H1 (cell line): ENCODE measurements at regions of chr3 and their contacts with region 1.

Region 1: DNA sequence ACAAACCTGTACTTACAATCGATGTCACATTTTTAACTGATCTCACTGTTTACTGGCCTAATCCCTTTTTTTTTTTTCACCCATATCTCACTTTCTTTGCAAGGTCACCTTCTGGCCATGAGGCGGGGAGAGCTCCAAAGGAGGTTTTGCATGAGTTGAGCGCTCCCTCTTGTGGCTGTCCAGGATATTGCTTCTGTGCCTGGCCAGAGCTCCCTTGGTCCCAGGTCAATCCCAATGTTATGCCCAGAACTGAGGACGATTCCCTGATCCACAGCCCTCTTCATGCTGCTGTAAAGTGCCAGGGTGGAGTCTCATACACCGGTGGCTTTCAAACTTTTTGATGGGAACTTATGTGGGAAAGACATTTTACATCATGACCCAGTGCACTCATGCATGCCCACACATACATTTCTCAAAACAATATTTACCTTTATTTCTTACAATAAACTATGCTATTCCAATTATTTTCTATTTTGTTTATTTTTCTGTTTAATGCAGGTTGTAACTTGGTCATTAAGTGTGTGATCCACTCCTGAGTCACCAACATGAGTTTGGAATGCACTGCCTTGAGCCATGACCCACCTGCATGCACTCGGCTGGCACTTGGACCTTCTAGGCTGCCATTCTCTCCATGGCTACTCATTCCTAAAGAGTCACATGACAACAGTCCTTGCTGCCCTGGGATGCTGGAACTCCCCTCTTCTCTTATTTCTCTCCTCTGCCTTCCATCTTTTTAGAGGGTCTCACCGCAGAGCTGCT is 9.6 kb upstream of the SST start:
- DNase-seq: peak; percentile 63 to 96
- H3K4me3 ChIP-seq: no peak overlapping the region
- H3K27ac ChIP-seq: no peak overlapping the region
- H3K4me1 ChIP-seq: no peaks in the 10 kb centered on the region; a peak in 1 of 7 replicates
- H3K27me3 ChIP-seq: peaks cover 0 to 3% (median 0%) of the 10 kb centered on the region in 4 experiments; a peak in 1 of 7 replicates
- CTCF ChIP-seq: peak; percentile 86 to 98 (median 96)
- EP300 ChIP-seq: no peak
- POLR2A ChIP-seq: no peak
- RAD21 ChIP-seq: peak; percentile 99

Region 2: GRCh38 chr3:187305881-187306280 is 373.9 kb before region 1 on chr3:
- CTCF ChIA-PET with region 1: interaction called, 30 read pairs
- POLR2A ChIA-PET with region 1: no interaction called
- DNase-seq: no peak
- H3K4me3 ChIP-seq: no peak overlapping the region
- H3K27ac ChIP-seq: no peak overlapping the region
- H3K4me1 ChIP-seq: no peaks in the 10 kb centered on the region; a peak in 1 of 7 replicates
- H3K27me3 ChIP-seq: no peaks in the 10 kb centered on the region
- CTCF ChIP-seq: no peak
- EP300 ChIP-seq: no peak
- POLR2A ChIP-seq: no peak
- RAD21 ChIP-seq: no peak

Region 3: DNA sequence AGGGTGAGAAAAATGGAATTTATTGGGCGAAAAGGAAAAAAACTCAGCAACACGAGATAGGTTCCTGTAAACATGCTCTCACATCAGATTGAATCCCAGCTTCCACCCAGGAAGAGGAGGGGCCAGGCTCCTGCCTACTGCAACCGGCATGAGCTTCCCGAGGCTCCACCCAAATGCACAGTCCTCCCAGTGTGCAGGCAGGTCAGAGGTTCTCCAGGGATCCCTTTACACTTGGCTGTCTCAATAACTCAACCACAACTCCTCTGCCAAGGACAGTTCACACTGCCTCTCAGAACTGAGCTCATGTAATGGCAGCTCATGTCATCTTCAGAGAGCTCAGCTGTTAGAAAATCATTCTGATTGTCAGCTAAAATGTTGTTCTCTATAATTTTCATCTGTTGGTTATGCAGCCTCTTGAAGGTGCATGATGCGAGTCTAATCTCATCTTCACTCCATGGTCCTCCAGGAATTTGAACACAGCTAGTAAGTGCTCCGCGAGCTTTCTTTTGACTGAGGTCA is 86.4 kb before region 1 on chr3:
- CTCF ChIA-PET with region 1: interaction called, 27 read pairs
- POLR2A ChIA-PET with region 1: no interaction called
- DNase-seq: no peak
- H3K4me3 ChIP-seq: no peak overlapping the region
- H3K27ac ChIP-seq: no peak overlapping the region
- H3K4me1 ChIP-seq: peaks cover 0 to 10% (median 4%) of the 10 kb centered on the region in 4 experiments; a peak in 3 of 7 replicates
- H3K27me3 ChIP-seq: no peaks in the 10 kb centered on the region
- CTCF ChIP-seq: no peak
- EP300 ChIP-seq: no peak
- POLR2A ChIP-seq: no peak
- RAD21 ChIP-seq: no peak

Region 4: GRCh38 chr3:187640569-187641059 is 39.2 kb before region 1 on chr3:
- CTCF ChIA-PET with region 1: interaction called, 15 read pairs
- POLR2A ChIA-PET with region 1: no interaction called
- DNase-seq: no peak
- H3K4me3 ChIP-seq: no peak overlapping the region
- H3K27ac ChIP-seq: no peak overlapping the region
- H3K4me1 ChIP-seq: no peaks in the 10 kb centered on the region
- H3K27me3 ChIP-seq: no peaks in the 10 kb centered on the region
- CTCF ChIP-seq: no peak
- EP300 ChIP-seq: no peak
- POLR2A ChIP-seq: no peak
- RAD21 ChIP-seq: no peak

Region 5: DNA sequence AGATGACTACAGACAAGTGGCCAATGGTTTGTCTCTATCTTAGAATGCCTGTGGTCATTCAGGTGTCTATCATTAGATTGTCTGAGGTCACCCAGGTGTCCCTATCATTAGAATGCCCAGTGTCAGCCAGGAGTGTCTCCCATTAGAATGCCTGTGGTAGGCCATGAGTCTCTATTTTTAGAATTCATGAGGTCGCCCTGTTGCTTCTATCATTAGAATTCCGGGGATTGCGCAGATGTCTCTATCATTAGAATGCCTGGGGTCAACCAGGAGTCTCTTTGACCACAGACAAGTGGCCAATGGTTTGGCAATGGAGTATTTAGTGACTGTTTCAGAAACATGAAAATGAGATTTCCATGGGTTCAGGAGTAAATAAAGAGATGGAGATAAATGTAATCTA is 15.0 kb after region 1 on chr3:
- CTCF ChIA-PET with region 1: interaction called, 11 read pairs
- POLR2A ChIA-PET with region 1: no interaction called
- DNase-seq: no peak
- H3K4me3 ChIP-seq: no peak overlapping the region
- H3K27ac ChIP-seq: no peak overlapping the region
- H3K4me1 ChIP-seq: no peaks in the 10 kb centered on the region
- H3K27me3 ChIP-seq: no peaks in the 10 kb centered on the region
- CTCF ChIP-seq: no peak
- EP300 ChIP-seq: no peak
- POLR2A ChIP-seq: no peak
- RAD21 ChIP-seq: no peak